ENCODE measurements at regions of chr1 and their contacts with region 1.

Region 1: GRCh38 chr1:107609808-107610207 is 355.2 kb downstream of the VAV3 start:
- DNase-seq: no peak
- H3K4me3 ChIP-seq: no peak overlapping the region
- H3K4me3 Mint-ChIP-seq: no peak overlapping the region
- H3K27ac ChIP-seq: no peak overlapping the region
- H3K27ac Mint-ChIP-seq: no peak overlapping the region
- H3K4me1 ChIP-seq: no peaks in the 10 kb centered on the region
- H3K4me1 Mint-ChIP-seq: no peaks in the 10 kb centered on the region
- H3K27me3 ChIP-seq: no peaks in the 10 kb centered on the region
- H3K27me3 Mint-ChIP-seq: no peaks in the 10 kb centered on the region
- CTCF ChIP-seq: no peak

Region 2: DNA sequence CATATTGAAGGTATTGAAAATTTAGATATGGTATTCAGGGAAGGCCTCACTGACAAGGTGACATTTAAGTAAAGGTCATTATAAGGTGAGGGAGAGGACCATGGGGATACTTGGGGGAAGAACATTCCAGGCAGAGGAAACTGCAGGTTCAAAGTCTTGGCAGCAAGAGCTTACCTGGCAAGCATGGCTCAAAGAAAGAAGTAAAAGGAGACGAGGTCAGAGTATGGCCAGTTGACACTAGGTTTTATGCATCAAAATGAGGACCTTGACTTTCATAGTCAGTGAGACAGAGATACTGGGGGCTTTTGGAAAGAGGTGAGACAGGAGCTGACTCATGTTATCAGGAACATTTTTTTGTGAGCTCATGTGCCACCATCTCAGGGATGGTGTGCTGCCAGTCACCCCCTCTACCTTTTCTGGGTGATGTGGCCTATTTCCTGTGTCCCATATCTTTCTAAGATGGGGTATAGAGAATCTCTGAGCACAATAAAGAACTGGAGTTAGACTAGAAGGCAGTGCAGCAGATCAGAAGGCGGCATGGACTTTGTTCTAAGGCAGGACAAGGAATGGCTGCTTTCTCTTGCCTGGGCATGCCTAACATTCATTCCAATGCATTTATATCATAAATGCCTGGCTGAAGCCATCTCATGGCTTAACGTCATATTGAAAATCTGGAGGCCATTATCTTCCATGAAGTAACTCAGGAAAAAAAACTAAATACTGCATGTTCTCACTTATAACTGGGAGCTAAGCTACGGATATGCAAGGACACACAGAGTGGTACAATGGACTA is 62.2 kb before region 1 on chr1:
- intact Hi-C with region 1: loop called in 1 of 2 experiments (anchors 10 kb)
- DNase-seq: no peak
- H3K4me3 ChIP-seq: no peak overlapping the region
- H3K4me3 Mint-ChIP-seq: no peak overlapping the region
- H3K27ac ChIP-seq: no peak overlapping the region
- H3K27ac Mint-ChIP-seq: no peak overlapping the region
- H3K4me1 ChIP-seq: no peaks in the 10 kb centered on the region
- H3K4me1 Mint-ChIP-seq: no peaks in the 10 kb centered on the region
- H3K27me3 ChIP-seq: no peaks in the 10 kb centered on the region
- H3K27me3 Mint-ChIP-seq: no peaks in the 10 kb centered on the region
- CTCF ChIP-seq: no peak

Measured in CD14-positive monocyte (primary cell).